AG04450 (cell line): ENCODE measurements at regions of chr13 and their contacts with region 1.

Region 1: DNA sequence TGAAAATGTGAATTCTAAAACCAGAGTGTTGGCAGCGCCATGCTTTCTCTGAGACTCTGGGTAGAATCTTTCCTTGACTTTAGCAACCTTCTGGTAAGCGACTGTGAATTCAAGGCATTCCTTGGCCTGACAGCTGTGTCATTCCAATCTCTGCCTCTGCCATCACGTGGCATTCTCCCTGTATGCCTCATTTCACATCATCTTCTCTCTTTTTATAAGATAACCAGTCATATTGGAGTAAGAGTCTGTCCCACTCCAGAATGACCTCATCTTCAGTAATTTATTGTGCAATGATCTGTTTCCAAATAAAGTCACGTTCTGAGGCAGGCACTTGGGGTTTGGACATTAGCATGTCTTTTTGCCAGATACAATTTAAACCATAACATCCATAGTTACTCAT is 103.4 kb upstream of the POSTN start:
- DNase-seq: peak; percentile 90
- H3K4me3 ChIP-seq: no peak overlapping the region
- H3K27ac ChIP-seq: peak overlapping the region; percentile 77
- H3K27me3 ChIP-seq: no peaks in the 10 kb centered on the region
- CTCF ChIP-seq: no peak

Region 2: GRCh38 chr13:37682496-37682895 is 19.5 kb before region 1 on chr13:
- CTCF ChIA-PET with region 1: no interaction called
- POLR2A ChIA-PET with region 1: interaction called, 16 read pairs
- DNase-seq: no peak
- H3K4me3 ChIP-seq: no peak overlapping the region
- H3K27ac ChIP-seq: no peak overlapping the region
- H3K27me3 ChIP-seq: no peaks in the 10 kb centered on the region
- CTCF ChIP-seq: no peak